SK-N-SH (cell line): ENCODE measurements at regions of chr18 and their contacts with region 1.

Region 1: DNA sequence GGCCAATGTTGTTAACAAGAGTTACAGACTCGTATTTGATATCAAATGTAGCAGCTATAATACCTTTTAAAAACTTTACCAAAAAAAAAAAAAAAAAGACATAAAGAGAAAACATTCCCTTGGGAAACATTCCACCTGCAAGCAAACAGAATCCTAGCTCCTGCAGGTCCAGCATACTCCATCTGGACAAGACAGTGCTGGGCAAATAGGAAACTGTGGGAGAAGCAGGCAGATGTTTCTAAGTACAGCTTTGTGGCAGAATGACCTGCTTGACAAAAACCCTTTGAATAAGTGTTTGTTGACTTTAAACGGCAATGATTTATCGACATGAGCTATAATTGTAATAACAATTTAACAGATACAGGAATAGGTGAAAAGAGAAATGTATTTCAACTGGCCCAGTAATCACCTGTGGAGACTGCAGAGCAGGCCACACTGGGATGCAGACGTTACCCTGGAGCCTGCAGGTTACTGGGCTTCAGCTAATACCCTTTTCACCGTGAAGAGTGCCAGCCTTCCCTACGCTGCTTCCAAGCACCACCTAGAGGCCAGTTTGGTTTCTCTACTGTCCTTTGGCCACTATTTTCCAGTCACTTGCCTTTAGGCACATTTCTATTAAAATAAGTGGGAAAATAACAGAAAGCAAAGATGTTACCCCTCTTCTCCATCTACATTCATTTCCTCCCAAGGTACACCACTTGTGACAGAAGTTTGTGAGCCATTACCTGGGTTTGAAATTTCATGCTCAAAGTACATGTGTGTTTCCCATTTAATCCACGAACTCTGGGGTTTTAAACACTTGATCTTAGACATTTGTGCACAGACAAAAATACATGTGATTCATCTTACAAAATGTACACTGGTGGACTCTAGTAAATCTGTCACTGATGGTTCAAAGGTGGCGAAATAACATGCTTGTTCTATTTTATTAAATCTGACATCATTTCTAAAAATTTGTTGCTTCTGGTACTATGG is 96.9 kb upstream of the ZNF397 start:
- DNase-seq: peak; percentile 70
- H3K4me3 ChIP-seq: no peak overlapping the region; a peak in 1 of 4 replicates
- H3K27ac ChIP-seq: peak overlapping the region in 1 of 2 experiments; percentile 25; a peak in 1 of 4 replicates
- H3K4me1 ChIP-seq: peaks cover 0 to 4% of the 10 kb centered on the region in 2 experiments; a peak in 1 of 4 replicates
- H3K27me3 ChIP-seq: no peaks in the 10 kb centered on the region
- CTCF ChIP-seq: peak; percentile 84
- EP300 ChIP-seq: no peak
- RAD21 ChIP-seq: peak; percentile 97

Region 2: GRCh38 chr18:34999756-35000289 is 144.1 kb before region 1 on chr18:
- CTCF ChIA-PET with region 1: interaction called, 17 read pairs
- POLR2A ChIA-PET with region 1: no interaction called
- DNase-seq: no peak
- H3K4me3 ChIP-seq: no peak overlapping the region
- H3K27ac ChIP-seq: no peak overlapping the region
- H3K4me1 ChIP-seq: peaks cover 0 to 2% of the 10 kb centered on the region in 2 experiments; a peak in 1 of 4 replicates
- H3K27me3 ChIP-seq: no peaks in the 10 kb centered on the region
- CTCF ChIP-seq: no peak
- EP300 ChIP-seq: no peak
- RAD21 ChIP-seq: no peak

Region 3: GRCh38 chr18:35029770-35030169 is 114.1 kb before region 1 on chr18:
- CTCF ChIA-PET with region 1: interaction called, 97 read pairs
- POLR2A ChIA-PET with region 1: interaction called, 5 read pairs
- DNase-seq: no peak
- H3K4me3 ChIP-seq: no peak overlapping the region
- H3K27ac ChIP-seq: no peak overlapping the region
- H3K4me1 ChIP-seq: peaks cover 0 to 16% of the 10 kb centered on the region in 2 experiments; a peak in 2 of 4 replicates
- H3K27me3 ChIP-seq: no peaks in the 10 kb centered on the region
- CTCF ChIP-seq: no peak
- EP300 ChIP-seq: no peak
- RAD21 ChIP-seq: no peak

Region 4: DNA sequence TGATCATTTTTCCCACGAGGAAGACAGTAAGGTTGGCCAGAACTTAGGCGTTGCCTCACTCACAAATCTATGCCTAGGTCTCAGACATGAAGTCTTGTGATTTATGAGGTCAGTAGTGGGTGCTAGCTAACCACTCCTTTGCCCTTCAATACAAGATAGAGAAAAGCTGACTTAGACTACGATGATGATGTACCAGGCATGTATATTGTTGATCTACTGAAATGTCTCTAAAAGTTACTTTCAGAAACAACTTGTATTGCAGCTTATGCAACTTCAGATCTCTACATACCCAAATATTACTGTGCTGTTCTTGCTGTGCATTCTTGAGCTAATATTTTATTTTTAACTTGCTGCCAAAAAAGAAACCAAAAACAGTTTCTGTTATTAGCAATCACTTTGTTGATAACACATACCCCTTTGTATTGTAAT is 72.1 kb before region 1 on chr18:
- CTCF ChIA-PET with region 1: interaction called, 15 read pairs
- POLR2A ChIA-PET with region 1: no interaction called
- DNase-seq: no peak
- H3K4me3 ChIP-seq: no peak overlapping the region
- H3K27ac ChIP-seq: no peak overlapping the region
- H3K4me1 ChIP-seq: peaks cover 4 to 23% of the 10 kb centered on the region in 2 experiments; a peak in 3 of 4 replicates
- H3K27me3 ChIP-seq: no peaks in the 10 kb centered on the region
- CTCF ChIP-seq: no peak
- EP300 ChIP-seq: no peak
- RAD21 ChIP-seq: no peak

Region 5: GRCh38 chr18:35085450-35086380 is 58.2 kb before region 1 on chr18:
- CTCF ChIA-PET with region 1: no interaction called
- POLR2A ChIA-PET with region 1: no interaction called
- DNase-seq: peak; percentile 63
- H3K4me3 ChIP-seq: no peak overlapping the region
- H3K27ac ChIP-seq: peak overlapping the region in 1 of 2 experiments; percentile 76; a peak in 2 of 4 replicates
- H3K4me1 ChIP-seq: peaks cover 16 to 22% of the 10 kb centered on the region in 2 experiments; a peak in 3 of 4 replicates
- H3K27me3 ChIP-seq: no peaks in the 10 kb centered on the region
- CTCF ChIP-seq: no peak
- EP300 ChIP-seq: peak in 1 of 2 experiments; percentile 89; a peak in 2 of 4 replicates
- RAD21 ChIP-seq: peak; percentile 8; the same call in 1 of the 2 replicates

Region 6: DNA sequence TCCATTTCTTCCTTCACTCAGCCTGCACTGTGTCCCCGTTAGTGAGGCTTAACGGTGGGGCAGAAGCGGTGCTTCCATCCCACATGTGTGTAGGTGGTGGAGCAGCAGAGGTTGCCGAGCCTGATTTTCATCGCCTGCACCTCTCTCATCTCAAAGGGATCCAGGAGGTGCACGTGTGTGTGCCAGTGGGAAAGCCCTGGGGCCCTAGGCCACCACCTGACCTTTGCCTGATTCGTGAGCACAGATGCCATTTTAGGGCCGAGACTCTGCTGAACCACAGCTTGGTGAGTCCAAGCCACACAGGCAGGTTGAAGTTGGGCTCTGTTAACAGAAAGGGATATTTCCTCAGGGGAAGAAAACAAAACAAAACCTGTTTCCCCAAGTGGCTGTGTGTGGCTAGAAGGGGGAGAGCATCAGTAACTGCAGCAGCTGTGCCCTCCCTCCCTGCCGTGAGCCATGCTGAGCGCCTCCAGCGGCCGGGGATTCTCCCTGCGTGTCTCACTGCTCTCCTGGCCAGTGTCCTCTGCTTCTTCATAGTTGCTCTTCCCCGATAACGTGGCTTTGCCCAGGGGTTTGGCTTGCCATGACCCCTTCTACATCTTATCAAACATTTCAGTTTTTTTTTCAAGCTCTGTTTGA is 21.2 kb before region 1 on chr18:
- CTCF ChIA-PET with region 1: interaction called, 36 read pairs
- POLR2A ChIA-PET with region 1: interaction called, 4 read pairs
- DNase-seq: peak; percentile 65
- H3K4me3 ChIP-seq: no peak overlapping the region; a peak in 1 of 4 replicates
- H3K27ac ChIP-seq: peak overlapping the region in 1 of 2 experiments; percentile 74; a peak in 2 of 4 replicates
- H3K4me1 ChIP-seq: peaks cover 4 to 27% of the 10 kb centered on the region in 2 experiments; a peak in 3 of 4 replicates
- H3K27me3 ChIP-seq: no peaks in the 10 kb centered on the region
- CTCF ChIP-seq: peak; percentile 35
- EP300 ChIP-seq: no peak
- RAD21 ChIP-seq: no peak; the same call in 1 of the 2 replicates